Naive thymus-derived CD4-positive, alpha-beta T cell (primary cell): ENCODE measurements at regions of chr1 and their contacts with region 1.

Region 1: DNA sequence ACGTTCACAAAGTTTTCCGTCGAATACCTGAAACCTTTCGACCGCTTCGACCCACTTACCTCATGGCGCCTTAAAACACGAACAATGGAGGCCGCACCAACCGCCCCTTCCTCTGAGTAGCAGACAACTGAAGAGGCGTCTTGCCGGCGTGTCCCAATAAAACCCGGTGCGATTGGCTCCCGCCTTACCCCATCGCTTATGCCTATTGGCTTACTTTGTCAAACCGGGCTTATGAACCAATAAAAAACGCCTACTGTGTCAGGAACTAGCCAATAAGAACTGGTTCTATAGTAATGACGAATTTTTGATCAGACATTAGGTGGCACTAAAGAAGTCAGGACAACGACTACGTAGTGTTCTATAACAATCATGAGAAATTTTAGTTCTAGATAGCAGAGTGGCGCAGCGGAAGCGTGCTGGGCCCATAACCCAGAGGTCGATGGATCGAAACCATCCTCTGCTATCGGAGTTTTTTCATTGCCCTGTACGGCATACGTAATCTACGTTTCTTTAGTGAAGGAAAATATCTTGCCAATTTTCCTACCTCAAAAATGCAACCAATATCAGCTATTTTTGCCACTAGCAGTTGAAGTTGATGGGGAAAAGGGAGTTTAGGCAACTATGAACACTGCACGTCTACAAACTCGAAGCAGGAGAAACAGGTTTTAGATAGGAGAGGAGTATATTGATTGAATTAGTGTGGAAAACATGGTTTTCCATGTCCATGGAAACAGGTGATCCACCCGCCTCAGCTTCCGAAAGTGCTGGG is at the start of gene ILF2:
- DNase-seq: peak; percentile 85 to 100 (median 98)
- ATAC-seq: peak; percentile 93
- H3K4me3 ChIP-seq: peak within 1 kb of the TSS; percentile 94
- H3K4me3 Mint-ChIP-seq: no peak within 1 kb of the TSS
- H3K27ac ChIP-seq: peak within 1 kb of the TSS; percentile 93
- H3K27ac Mint-ChIP-seq: peak within 1 kb of the TSS in 2 of 9 donors; percentile 62 to 73
- H3K4me1 ChIP-seq: peaks cover 18 to 19% of the 10 kb centered on the region in 2 donors
- H3K4me1 Mint-ChIP-seq: peaks cover 11 to 28% (median 17%) of the 10 kb centered on the region in 7 donors
- H3K27me3 ChIP-seq: no peaks in the 10 kb centered on the region
- H3K27me3 Mint-ChIP-seq: peaks cover 0 to under 1% (median 0%) of the 10 kb centered on the region in 5 donors
- total RNA-seq, gene ILF2: 83.6 to 177 (median 113) TPM

Region 2: GRCh38 chr1:153532769-153533599 is 138.1 kb before region 1 on chr1:
- CTCF ChIA-PET with region 1: interaction called, 7 read pairs
- POLR2A ChIA-PET with region 1: interaction called, 4 read pairs
- intact Hi-C with region 1: loop called (anchors 1 to 2 kb)
- DNase-seq: peak; percentile 62 to 85 (median 78)
- ATAC-seq: peak; percentile 55
- H3K4me3 ChIP-seq: peak overlapping the region; percentile 49
- H3K4me3 Mint-ChIP-seq: peak overlapping the region; percentile 77 to 98 (median 96)
- H3K27ac ChIP-seq: peak overlapping the region; percentile 98
- H3K27ac Mint-ChIP-seq: peak overlapping the region; percentile 86 to 99 (median 96)
- H3K4me1 ChIP-seq: peaks cover 53 to 59% of the 10 kb centered on the region in 2 donors
- H3K4me1 Mint-ChIP-seq: peaks cover 46 to 75% (median 63%) of the 10 kb centered on the region in 7 donors
- H3K27me3 ChIP-seq: no peaks in the 10 kb centered on the region
- H3K27me3 Mint-ChIP-seq: no peaks in the 10 kb centered on the region

Region 3: GRCh38 chr1:153649863-153650235 is 21.2 kb before region 1 on chr1:
- CTCF ChIA-PET with region 1: interaction called, 3 read pairs
- POLR2A ChIA-PET with region 1: interaction called, 13 read pairs
- intact Hi-C with region 1: no loop called
- DNase-seq: peak in 2 of 9 donors; percentile 23 to 33
- ATAC-seq: no peak
- H3K4me3 ChIP-seq: no peak overlapping the region
- H3K4me3 Mint-ChIP-seq: peak overlapping the region in 9 of 10 donors; percentile 67 to 85 (median 80)
- H3K27ac ChIP-seq: peak overlapping the region; percentile 69
- H3K27ac Mint-ChIP-seq: peak overlapping the region; percentile 56 to 96 (median 92)
- H3K4me1 ChIP-seq: peaks cover 7 to 28% of the 10 kb centered on the region in 2 donors
- H3K4me1 Mint-ChIP-seq: peaks cover 26 to 57% (median 52%) of the 10 kb centered on the region in 7 donors
- H3K27me3 ChIP-seq: no peaks in the 10 kb centered on the region
- H3K27me3 Mint-ChIP-seq: no peaks in the 10 kb centered on the region

Region 4: GRCh38 chr1:153783233-153784190 is 112.5 kb after region 1 on chr1:
- CTCF ChIA-PET with region 1: no interaction called
- POLR2A ChIA-PET with region 1: interaction called, 4 read pairs
- intact Hi-C with region 1: loop called in 1 of 2 experiments (anchors 1 kb)
- DNase-seq: peak; percentile 86 to 95 (median 92)
- ATAC-seq: peak; percentile 99
- H3K4me3 ChIP-seq: peak overlapping the region; percentile 78
- H3K4me3 Mint-ChIP-seq: peak overlapping the region; percentile 80 to 97 (median 90)
- H3K27ac ChIP-seq: peak overlapping the region; percentile 96
- H3K27ac Mint-ChIP-seq: peak overlapping the region; percentile 92 to 99 (median 95)
- H3K4me1 ChIP-seq: peaks cover 0 to 10% of the 10 kb centered on the region in 2 donors
- H3K4me1 Mint-ChIP-seq: peaks cover 0 to 17% (median 9%) of the 10 kb centered on the region in 7 donors
- H3K27me3 ChIP-seq: no peaks in the 10 kb centered on the region
- H3K27me3 Mint-ChIP-seq: peaks cover 0 to 6% (median 4%) of the 10 kb centered on the region in 5 donors

Region 5: DNA sequence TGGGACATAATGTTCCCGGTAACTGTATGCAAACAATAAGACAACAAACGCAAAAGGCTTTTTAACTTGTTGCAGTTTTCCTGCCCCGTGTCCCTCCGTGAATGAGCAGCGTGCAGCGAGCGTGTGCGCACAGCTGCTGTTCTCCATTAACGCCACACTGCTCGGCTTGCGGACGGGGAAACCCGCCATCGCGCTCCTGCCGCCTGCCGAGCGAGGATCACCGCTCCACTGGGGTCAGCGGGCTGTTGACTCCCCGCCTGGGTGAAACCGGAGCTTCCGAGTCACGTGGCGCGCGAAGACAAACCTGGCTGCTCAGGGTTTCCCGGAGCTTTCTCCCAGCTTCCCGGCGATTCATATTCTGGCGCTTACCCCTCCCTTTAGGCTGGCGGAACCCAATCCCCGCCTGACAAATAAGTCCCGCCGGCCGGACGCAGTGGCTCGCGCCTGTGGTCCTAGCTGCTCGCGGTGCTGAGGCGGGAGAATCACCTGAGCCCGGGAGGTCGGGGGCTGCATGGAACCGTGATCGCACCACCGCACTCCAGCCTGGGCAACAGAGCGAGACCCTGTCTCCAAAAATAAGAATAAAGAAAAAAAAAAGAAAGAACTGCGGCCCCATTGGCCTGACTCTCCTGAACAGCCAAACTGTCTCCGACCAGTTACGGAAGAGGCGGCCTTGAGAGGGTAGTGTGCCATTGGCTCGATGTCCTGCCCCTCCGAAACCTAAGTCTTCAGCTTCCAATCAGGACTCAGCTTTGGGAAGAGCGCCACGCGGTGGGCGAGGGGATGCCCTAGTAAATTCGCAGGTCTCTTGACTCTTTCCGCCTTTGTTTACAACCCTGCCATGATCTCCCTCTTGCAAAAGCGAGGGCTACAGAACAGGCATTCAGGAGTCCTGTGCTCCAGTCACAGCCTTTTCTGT is 296.3 kb after region 1 on chr1 and contains the start of gene CREB3L4:
- CTCF ChIA-PET with region 1: no interaction called
- POLR2A ChIA-PET with region 1: interaction called, 3 read pairs
- intact Hi-C with region 1: loop called (anchors 1 to 5 kb)
- DNase-seq: peak; percentile 68 to 89 (median 84)
- ATAC-seq: peak; percentile 91
- H3K4me3 ChIP-seq: peak within 1 kb of the TSS; percentile 89
- H3K4me3 Mint-ChIP-seq: peak within 1 kb of the TSS; percentile 83 to 97 (median 92)
- H3K27ac ChIP-seq: peak within 1 kb of the TSS; percentile 79
- H3K27ac Mint-ChIP-seq: peak within 1 kb of the TSS; percentile 87 to 99 (median 94)
- H3K4me1 ChIP-seq: peaks cover 32 to 40% of the 10 kb centered on the region in 2 donors
- H3K4me1 Mint-ChIP-seq: peaks cover 27 to 72% (median 57%) of the 10 kb centered on the region in 7 donors
- H3K27me3 ChIP-seq: no peaks in the 10 kb centered on the region
- H3K27me3 Mint-ChIP-seq: no peaks in the 10 kb centered on the region
- total RNA-seq, gene CREB3L4: 4.6 to 8.4 (median 7.0) TPM

Region 6: DNA sequence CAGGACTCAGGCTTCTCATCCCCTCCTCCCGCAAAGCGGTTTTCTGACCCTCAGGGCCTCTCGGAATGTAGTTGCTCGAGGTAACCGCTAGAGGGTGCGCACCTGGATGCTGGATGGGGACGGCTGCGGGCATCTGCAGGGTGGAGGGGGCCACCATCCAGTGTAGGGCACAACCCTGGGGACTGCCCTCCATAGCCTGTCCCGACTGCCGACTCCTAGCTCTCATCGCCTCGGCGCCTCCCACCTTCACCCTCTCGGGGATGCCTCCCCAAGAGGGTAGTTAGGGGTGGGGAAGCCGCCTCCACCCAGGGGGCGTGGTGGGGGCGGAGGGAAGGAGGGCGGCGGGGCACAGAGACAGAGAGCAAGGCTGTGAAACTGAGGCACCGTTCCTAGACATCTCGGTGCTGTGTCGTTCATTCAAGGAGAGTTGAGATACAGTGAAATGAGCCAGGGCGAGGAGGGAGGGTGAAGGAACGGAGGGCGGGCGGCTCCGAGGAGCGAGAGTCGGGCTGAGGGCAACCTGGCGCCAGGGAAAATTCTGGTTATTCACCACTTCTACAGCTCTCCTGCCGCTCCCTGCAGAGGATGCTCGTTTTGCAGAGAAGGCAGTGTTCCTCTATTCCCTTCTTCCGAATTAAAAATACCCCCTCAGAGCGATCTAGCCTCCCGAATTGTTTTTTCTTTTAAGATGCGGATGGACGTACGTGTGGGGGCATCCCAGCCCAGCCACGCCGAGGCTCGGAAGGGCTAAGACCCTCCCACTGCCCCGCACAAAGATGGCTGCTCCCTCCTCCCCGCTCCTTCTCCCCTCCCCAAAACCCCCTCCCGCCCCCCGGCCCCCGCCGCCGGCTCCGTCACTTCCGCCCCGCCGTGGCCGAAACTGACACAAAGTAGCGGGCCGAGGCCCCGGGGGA is 653.9 kb after region 1 on chr1 and contains the start of gene ATP8B2:
- CTCF ChIA-PET with region 1: interaction called, 3 read pairs
- POLR2A ChIA-PET with region 1: no interaction called
- intact Hi-C with region 1: loop called in 1 of 2 experiments (anchors 2 kb)
- DNase-seq: peak; percentile 60 to 82 (median 77)
- ATAC-seq: peak; percentile 80
- H3K4me3 ChIP-seq: peak within 1 kb of the TSS; percentile 79
- H3K4me3 Mint-ChIP-seq: peak within 1 kb of the TSS; percentile 92 to 98 (median 96)
- H3K27ac ChIP-seq: peak within 1 kb of the TSS; percentile 94
- H3K27ac Mint-ChIP-seq: peak within 1 kb of the TSS; percentile 80 to 95 (median 92)
- H3K4me1 ChIP-seq: peaks cover 24 to 36% of the 10 kb centered on the region in 2 donors
- H3K4me1 Mint-ChIP-seq: peaks cover 27 to 42% (median 38%) of the 10 kb centered on the region in 7 donors
- H3K27me3 ChIP-seq: no peaks in the 10 kb centered on the region
- H3K27me3 Mint-ChIP-seq: peaks cover 0 to 31% (median 0%) of the 10 kb centered on the region in 5 donors
- total RNA-seq, gene ATP8B2: 105 to 130 (median 117) TPM